AG04450 (cell line): ENCODE measurements at regions of chr14 and their contacts with region 1.

Region 1: GRCh38 chr14:30283826-30284446 is 275.0 kb upstream of the G2E3 start:
- DNase-seq: no peak
- H3K4me3 ChIP-seq: no peak overlapping the region
- H3K27ac ChIP-seq: no peak overlapping the region
- H3K27me3 ChIP-seq: no peaks in the 10 kb centered on the region
- CTCF ChIP-seq: peak; percentile 95

Region 2: DNA sequence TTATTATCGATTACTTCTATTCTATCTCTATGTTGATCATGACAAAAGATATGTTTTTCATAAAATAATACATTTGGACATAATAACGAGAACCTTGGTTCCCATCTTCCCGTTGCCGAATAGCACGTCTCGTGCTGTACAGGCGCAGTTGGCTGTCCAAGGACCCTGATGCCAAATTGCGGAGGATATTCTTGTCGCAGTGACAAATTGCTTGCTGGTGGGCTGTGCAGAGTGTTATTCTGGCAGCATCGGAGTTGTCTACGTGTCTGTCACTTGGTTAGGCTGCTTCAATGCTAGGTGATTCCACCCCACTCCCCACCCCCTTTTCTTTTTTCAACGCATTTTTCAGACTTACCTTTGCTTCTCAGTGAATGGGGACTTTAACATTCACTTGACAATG is 903.1 kb before region 1 on chr14:
- CTCF ChIA-PET with region 1: no interaction called
- POLR2A ChIA-PET with region 1: no interaction called
- DNase-seq: no peak
- H3K4me3 ChIP-seq: no peak overlapping the region
- H3K27ac ChIP-seq: no peak overlapping the region
- H3K27me3 ChIP-seq: no peaks in the 10 kb centered on the region
- CTCF ChIP-seq: no peak

Region 3: GRCh38 chr14:30204431-30204980 is 79.4 kb before region 1 on chr14:
- CTCF ChIA-PET with region 1: no interaction called
- POLR2A ChIA-PET with region 1: no interaction called
- DNase-seq: no peak
- H3K4me3 ChIP-seq: no peak overlapping the region
- H3K27ac ChIP-seq: no peak overlapping the region
- H3K27me3 ChIP-seq: no peaks in the 10 kb centered on the region
- CTCF ChIP-seq: no peak

Region 4: DNA sequence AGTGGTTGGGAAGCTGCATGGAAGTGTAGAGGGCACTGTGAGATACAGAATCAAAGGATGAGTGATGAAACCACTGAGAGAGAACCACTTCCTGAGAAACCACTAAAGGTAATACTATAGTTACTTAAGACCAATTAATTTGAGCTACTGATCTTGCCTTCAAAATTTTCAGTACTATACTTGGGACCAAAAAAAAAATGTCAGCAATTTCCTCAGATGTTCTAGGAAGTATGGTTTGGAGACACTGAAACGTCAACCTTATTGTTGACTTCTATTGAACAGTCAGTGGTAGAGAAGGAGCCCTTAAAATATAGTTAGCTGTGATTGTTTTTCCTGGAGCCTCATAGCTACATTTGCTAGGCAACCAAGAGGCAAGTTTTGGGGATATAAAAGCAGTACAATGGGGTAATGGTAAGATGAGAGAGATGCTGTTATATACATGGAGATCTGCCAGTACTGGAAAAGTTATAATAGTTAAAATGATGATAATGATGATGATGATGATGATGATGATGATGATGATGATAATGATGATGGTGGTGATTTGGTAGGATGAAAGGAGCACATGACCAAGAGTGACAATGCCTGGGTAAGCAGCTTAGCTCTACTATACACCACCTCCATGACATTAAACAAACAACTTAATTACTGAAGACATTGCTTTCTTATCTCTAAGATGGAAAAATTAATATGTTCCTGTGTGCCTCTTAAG is 25.8 kb before region 1 on chr14:
- CTCF ChIA-PET with region 1: interaction called, 40 read pairs
- POLR2A ChIA-PET with region 1: no interaction called
- DNase-seq: no peak
- H3K4me3 ChIP-seq: no peak overlapping the region
- H3K27ac ChIP-seq: no peak overlapping the region
- H3K27me3 ChIP-seq: no peaks in the 10 kb centered on the region
- CTCF ChIP-seq: no peak

Region 5: DNA sequence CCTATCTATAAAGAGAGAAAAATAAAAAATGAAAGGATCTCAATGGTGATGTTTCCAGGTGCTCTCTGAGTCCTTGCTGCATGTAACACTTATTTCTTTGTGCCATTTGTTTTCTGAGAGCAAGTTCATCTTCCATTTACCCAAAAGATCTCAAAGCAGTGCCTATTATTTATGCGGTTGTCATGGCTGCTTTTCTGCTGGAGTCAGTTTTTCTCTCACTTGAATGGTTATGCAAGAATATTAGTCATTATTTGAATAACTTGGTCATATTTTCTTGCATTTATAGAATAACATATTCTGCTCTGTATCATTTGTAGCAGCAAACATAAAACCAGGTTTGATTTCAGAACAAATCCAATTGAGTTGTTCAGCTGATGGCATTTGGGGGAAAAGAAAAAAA is 133.2 kb after region 1 on chr14:
- CTCF ChIA-PET with region 1: no interaction called
- POLR2A ChIA-PET with region 1: no interaction called
- DNase-seq: no peak
- H3K4me3 ChIP-seq: no peak overlapping the region
- H3K27ac ChIP-seq: no peak overlapping the region
- H3K27me3 ChIP-seq: no peaks in the 10 kb centered on the region
- CTCF ChIP-seq: no peak

Region 6: DNA sequence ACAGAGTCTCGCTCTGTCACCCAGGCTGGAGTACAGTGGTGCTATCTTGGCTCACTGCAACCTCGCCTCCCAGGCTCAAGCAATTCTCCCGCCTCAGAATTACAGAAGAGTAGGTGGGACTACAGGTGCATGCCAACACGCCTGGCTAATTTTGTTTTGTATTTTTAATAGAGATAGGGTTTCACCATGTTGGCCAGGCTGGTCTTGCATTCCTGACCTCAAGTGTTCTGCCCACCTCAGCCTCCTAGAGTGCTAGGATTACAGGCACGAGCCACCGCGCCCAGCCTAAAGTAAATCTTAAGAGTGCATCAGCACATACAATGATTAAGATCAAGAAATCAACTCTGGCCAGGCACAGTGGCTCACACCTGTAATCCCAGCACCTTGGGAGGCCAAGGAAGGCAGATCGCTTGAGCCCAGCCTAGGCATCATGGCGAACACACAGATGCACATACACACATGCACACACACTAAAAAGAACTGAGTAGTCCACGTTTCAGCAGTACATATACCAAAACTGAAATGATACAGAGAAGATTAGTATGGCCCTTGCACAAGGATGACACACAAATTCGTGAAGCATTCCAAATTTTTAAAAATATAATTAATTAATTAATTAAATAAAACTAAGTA is 858.6 kb after region 1 on chr14:
- CTCF ChIA-PET with region 1: no interaction called
- POLR2A ChIA-PET with region 1: no interaction called
- DNase-seq: no peak
- H3K4me3 ChIP-seq: no peak overlapping the region
- H3K27ac ChIP-seq: no peak overlapping the region
- H3K27me3 ChIP-seq: no peaks in the 10 kb centered on the region
- CTCF ChIP-seq: no peak